Activated CD4-positive, alpha-beta memory T cell treated with anti-CD3 and anti-CD28 coated beads, Interleukin-2, amount 10 ng/mL, durations not matched to agents 7 days and 5 days (primary cell): ENCODE measurements at regions of chr3 and their contacts with region 1.

Region 1: DNA sequence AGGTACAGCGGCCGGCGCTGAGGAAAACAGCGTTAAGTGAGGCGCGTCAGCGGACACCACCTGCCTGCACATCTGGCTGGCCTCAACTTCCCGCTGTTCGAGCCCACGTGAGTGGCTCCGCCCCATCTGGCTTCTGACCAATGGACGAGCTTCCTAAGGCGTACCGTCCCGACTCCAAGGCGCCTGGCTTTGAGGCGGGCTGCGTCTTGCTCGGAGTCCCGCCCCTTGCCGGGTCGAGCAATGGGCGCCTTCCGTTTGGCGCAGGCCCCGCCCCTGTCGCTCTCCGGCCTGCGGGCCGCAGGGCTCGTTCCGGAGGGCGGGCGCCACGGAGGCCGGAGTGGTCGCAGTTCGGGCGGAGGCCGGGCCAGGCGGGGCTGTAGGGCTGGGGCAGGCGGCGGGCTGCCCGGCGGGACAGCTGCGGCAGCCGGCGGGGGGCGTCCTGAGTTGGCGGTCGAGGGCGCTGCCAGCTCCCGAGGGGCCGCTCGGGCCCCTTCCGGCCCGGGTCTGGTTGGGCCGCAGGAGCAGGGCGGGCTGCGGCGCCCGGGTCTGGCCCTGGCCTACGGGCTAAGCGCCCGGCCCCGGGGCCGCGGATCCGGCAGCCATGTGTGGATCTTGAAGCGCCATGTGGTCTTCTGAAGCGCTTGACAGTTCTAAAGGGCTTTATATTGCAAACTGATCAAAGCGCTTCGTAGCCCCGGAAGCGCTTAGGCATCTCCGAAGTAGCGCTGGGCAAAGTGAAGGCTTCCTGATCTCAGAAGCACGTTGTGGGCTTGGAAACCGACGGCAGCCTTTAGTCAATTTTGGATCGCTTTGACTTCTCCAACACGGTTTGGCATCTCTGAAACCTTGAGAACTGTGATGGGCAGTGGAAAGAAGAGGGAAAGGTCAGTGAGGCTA is at the start of gene TATDN2:
- DNase-seq: peak; percentile 96
- H3K4me3 Mint-ChIP-seq: peak within 1 kb of the TSS; percentile 98
- H3K27ac Mint-ChIP-seq: peak within 1 kb of the TSS; percentile 92
- H3K4me1 Mint-ChIP-seq: peaks cover 55% of the 10 kb centered on the region
- H3K27me3 Mint-ChIP-seq: no peaks in the 10 kb centered on the region
- total RNA-seq, gene TATDN2: 57.1 to 59.5 TPM

Region 2: GRCh38 chr3:9792405-9793160 is 455.8 kb before region 1 on chr3 and contains the starts of genes ARPC4 and TADA3:
- CTCF ChIA-PET with region 1: no interaction called
- POLR2A ChIA-PET with region 1: no interaction called
- DNase-seq: peak; percentile 93
- H3K4me3 Mint-ChIP-seq: peak within 1 kb of the TSS; percentile 97
- H3K27ac Mint-ChIP-seq: peak within 1 kb of the TSS; percentile 99
- H3K4me1 Mint-ChIP-seq: peaks cover 63% of the 10 kb centered on the region
- H3K27me3 Mint-ChIP-seq: no peaks in the 10 kb centered on the region
- total RNA-seq, gene ARPC4: 255 to 266 TPM
- total RNA-seq, gene TADA3: 88.1 to 88.3 TPM

Region 3: GRCh38 chr3:10142707-10143566 is 105.5 kb before region 1 on chr3:
- CTCF ChIA-PET with region 1: interaction called, 3 read pairs
- POLR2A ChIA-PET with region 1: interaction called, 11 read pairs
- DNase-seq: peak; percentile 32
- H3K4me3 Mint-ChIP-seq: peak overlapping the region; percentile 85
- H3K27ac Mint-ChIP-seq: peak overlapping the region; percentile 96
- H3K4me1 Mint-ChIP-seq: peaks cover 42% of the 10 kb centered on the region
- H3K27me3 Mint-ChIP-seq: no peaks in the 10 kb centered on the region

Region 4: GRCh38 chr3:10185804-10186762 is 62.3 kb before region 1 on chr3:
- CTCF ChIA-PET with region 1: interaction called, 4 read pairs
- POLR2A ChIA-PET with region 1: interaction called, 12 read pairs
- DNase-seq: peak; percentile 33
- H3K4me3 Mint-ChIP-seq: peak overlapping the region; percentile 18
- H3K27ac Mint-ChIP-seq: peak overlapping the region; percentile 78
- H3K4me1 Mint-ChIP-seq: peaks cover 55% of the 10 kb centered on the region
- H3K27me3 Mint-ChIP-seq: no peaks in the 10 kb centered on the region

Region 5: GRCh38 chr3:10192953-10193691 is 55.3 kb before region 1 on chr3:
- CTCF ChIA-PET with region 1: no interaction called
- POLR2A ChIA-PET with region 1: interaction called, 22 read pairs
- DNase-seq: peak; percentile 69
- H3K4me3 Mint-ChIP-seq: peak overlapping the region; percentile 7
- H3K27ac Mint-ChIP-seq: peak overlapping the region; percentile 98
- H3K4me1 Mint-ChIP-seq: peaks cover 82% of the 10 kb centered on the region
- H3K27me3 Mint-ChIP-seq: no peaks in the 10 kb centered on the region

Region 6: DNA sequence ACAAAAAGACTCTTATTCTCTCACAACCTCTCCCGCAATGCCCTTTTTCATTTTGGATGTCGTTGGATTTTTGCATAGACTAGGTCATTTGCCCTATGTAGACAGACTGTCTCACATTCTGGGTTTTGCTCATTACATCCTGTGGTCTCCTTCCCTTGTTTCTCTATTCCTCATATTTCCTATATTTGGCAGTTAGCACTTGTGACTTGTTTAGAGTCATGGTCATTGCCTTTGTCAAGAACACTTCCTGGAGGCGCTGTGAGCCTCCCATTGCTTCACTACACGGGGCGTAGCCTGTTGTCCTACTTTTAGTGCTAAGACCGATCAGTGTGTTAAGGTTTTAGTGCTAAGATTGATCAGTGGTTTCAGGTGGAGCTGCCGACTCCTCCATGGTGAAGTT is 16.3 kb before region 1 on chr3:
- CTCF ChIA-PET with region 1: interaction called, 4 read pairs
- POLR2A ChIA-PET with region 1: interaction called, 13 read pairs
- DNase-seq: no peak
- H3K4me3 Mint-ChIP-seq: no peak overlapping the region
- H3K27ac Mint-ChIP-seq: peak overlapping the region; percentile 79
- H3K4me1 Mint-ChIP-seq: peaks cover 35% of the 10 kb centered on the region
- H3K27me3 Mint-ChIP-seq: no peaks in the 10 kb centered on the region

Region 7: DNA sequence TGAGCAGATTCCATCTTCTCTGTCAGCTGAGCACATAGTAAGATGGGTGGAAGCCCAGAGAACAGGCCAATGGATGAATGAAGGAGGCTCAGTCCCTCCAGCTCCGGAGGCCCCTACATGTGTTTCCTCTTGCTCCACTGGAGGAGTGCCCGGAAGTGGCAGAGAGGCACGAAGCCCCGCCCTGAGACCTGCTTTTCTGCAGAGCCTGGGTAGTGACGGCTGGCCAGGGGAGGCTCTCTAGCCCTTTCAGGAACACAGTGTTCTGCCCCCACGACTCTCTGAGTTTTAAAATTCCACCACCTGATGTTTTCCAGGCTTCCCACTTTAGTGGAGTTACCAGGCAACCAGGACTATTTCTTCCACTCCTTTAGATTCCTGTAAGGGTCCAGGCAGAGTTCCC is 418.2 kb after region 1 on chr3:
- CTCF ChIA-PET with region 1: no interaction called
- POLR2A ChIA-PET with region 1: no interaction called
- DNase-seq: peak; percentile 22
- H3K4me3 Mint-ChIP-seq: no peak overlapping the region
- H3K27ac Mint-ChIP-seq: no peak overlapping the region
- H3K4me1 Mint-ChIP-seq: peaks cover 8% of the 10 kb centered on the region
- H3K27me3 Mint-ChIP-seq: peaks cover 12% of the 10 kb centered on the region